ENCODE measurements at regions of chr12 and their contacts with region 1.

Region 1: DNA sequence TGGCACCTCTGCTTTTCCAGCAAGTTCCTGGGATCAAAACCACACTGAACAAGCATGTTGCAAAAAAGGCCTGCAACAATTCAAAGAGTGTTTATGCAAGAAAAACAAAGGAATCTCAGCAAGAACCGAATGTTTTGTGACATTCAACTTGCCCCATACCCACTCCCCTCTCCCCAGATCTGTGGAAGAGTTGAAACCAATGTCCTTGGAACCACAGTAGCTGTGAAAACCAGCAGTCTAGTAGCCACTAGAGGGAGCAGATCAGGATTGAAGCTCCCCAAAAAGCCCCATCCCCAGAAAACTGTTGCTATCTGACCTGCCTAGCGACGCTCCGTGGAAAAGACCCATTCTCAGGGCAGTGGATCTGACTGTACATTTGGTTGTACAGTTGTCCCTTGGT is 27.1 kb downstream of the PRKAB1 start:
- DNase-seq: peak; percentile 21
- ATAC-seq: peak; percentile 72 to 80; a peak in 5 of 6 replicates
- H3K4me3 ChIP-seq: no peak overlapping the region
- H3K27ac ChIP-seq: no peak overlapping the region
- H3K4me1 ChIP-seq: no peaks in the 10 kb centered on the region
- CTCF ChIP-seq: peak; percentile 50
- EP300 ChIP-seq: no peak
- POLR2A ChIP-seq: no peak
- RAD21 ChIP-seq: peak in 1 of 2 experiments; percentile 17; a peak in 2 of 5 replicates

Region 2: GRCh38 chr12:119681961-119682638 is 12.9 kb before region 1 on chr12:
- CTCF ChIA-PET with region 1: interaction called, 11 read pairs
- POLR2A ChIA-PET with region 1: no interaction called
- DNase-seq: no peak
- ATAC-seq: no peak
- H3K4me3 ChIP-seq: no peak overlapping the region
- H3K27ac ChIP-seq: no peak overlapping the region
- H3K4me1 ChIP-seq: peaks cover 14% of the 10 kb centered on the region; the same call in 1 of the 3 replicates
- CTCF ChIP-seq: no peak
- EP300 ChIP-seq: no peak
- POLR2A ChIP-seq: no peak
- RAD21 ChIP-seq: no peak

Region 3: DNA sequence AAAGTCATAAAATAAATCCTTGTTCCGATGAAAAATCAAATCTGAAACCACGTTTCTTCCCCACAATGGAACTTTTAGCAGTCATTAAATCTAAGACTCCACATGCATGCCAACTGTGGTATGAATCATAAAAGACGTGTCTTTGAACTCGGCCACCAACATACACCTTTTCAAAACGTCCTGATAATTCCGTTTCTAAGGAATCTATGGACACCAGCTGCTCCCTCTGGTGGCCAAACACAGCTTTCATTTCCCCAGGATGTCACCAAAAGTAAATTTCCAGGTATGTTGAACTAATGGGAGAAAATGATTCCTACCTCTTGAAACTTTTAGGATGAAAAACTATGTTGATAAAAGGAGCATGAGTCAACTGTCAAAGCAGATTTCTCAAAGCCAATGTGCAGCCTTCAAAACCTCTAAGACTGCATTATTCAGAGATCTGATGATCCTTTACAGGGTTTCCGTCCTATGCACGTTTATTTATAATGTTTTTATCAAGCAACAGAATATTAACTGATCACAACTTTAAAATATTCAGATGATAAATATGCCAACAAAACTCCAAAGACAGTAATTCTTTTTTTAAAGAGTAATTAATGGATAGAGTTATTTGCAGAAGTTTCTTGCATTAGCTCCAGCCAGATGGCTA is 85.9 kb after region 1 on chr12:
- CTCF ChIA-PET with region 1: interaction called, 12 read pairs
- POLR2A ChIA-PET with region 1: no interaction called
- DNase-seq: peak; percentile 57 to 64
- ATAC-seq: peak in 1 of 2 experiments; percentile 85; a peak in 3 of 6 replicates
- H3K4me3 ChIP-seq: no peak overlapping the region
- H3K27ac ChIP-seq: no peak overlapping the region
- H3K4me1 ChIP-seq: no peaks in the 10 kb centered on the region
- CTCF ChIP-seq: peak; percentile 87
- EP300 ChIP-seq: no peak
- POLR2A ChIP-seq: no peak
- RAD21 ChIP-seq: peak; percentile 45 to 52; a peak in 4 of 5 replicates

Region 4: GRCh38 chr12:119902084-119902509 is 207.1 kb after region 1 on chr12:
- CTCF ChIA-PET with region 1: interaction called, 11 read pairs
- POLR2A ChIA-PET with region 1: no interaction called
- DNase-seq: peak; percentile 82 to 88
- ATAC-seq: peak; percentile 96 to 98
- H3K4me3 ChIP-seq: no peak overlapping the region
- H3K27ac ChIP-seq: no peak overlapping the region
- H3K4me1 ChIP-seq: 0 out of 3 replicates have a peak, but pooled peaks cover 3% of the 10 kb centered on the region
- CTCF ChIP-seq: peak; percentile 89
- EP300 ChIP-seq: no peak
- POLR2A ChIP-seq: no peak
- RAD21 ChIP-seq: peak; percentile 75 to 93